Pancreas (tissue), 10 donors: ENCODE measurements at regions of chr1 and their contacts with region 1.

Region 1: GRCh38 chr1:225777583-225778336 is at the start of gene SRP9:
- DNase-seq: peak; percentile 98 to 100 (median 99)
- ATAC-seq: peak; percentile 98 to 99 (median 99)
- H3K4me3 ChIP-seq: peak within 1 kb of the TSS; percentile 63 to 86 (median 78)
- H3K27ac ChIP-seq: peak within 1 kb of the TSS; percentile 85 to 95 (median 89)
- H3K4me1 ChIP-seq: peaks cover 10 to 50% (median 25%) of the 10 kb centered on the region in 3 donors
- H3K27me3 ChIP-seq: no peaks in the 10 kb centered on the region
- CTCF ChIP-seq: peak; percentile 71 to 85 (median 77)
- total RNA-seq, gene SRP9: 63.0 to 102 (median 89.5) TPM

Region 2: GRCh38 chr1:225474986-225475820 is 302.6 kb before region 1 on chr1:
- intact Hi-C with region 1: loop called in 1 of 3 experiments (anchors 10 kb)
- DNase-seq: peak; percentile 40 to 91 (median 80)
- ATAC-seq: peak; percentile 88 to 99 (median 98)
- H3K4me3 ChIP-seq: no peak overlapping the region
- H3K27ac ChIP-seq: no peak overlapping the region
- H3K4me1 ChIP-seq: no peaks in the 10 kb centered on the region
- H3K27me3 ChIP-seq: no peaks in the 10 kb centered on the region
- CTCF ChIP-seq: peak; percentile 100

Region 3: DNA sequence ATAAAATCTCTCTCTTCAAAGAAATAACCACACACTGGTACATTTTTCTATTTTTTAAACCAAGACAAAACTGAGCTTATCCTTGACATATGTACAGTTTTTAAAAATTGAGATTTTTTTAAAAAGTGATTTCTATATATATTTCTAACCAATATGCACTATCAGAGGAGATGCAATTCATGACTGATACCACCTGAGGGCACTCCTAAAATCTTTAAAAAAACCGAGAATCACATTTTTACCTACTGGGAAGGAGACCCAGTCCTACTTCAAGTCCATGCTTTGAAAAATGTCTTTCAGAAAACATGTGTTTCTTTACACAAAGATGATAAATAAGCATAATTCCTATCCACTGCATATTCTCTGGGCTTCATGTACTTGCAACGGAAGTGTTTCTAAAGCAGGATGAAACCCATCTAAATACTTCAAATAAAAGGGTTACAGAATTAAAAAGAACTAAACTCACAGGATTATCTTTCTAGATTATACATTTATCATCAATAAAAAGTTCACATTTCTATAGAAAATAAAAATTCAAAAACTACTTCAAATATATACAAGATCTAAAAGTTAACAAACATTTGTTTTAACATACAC is 223.4 kb before region 1 on chr1:
- intact Hi-C with region 1: loop called in 2 of 3 experiments (anchors 10 kb)
- DNase-seq: no peak
- ATAC-seq: peak; percentile 69 to 84 (median 80)
- H3K4me3 ChIP-seq: no peak overlapping the region
- H3K27ac ChIP-seq: no peak overlapping the region
- H3K4me1 ChIP-seq: no peaks in the 10 kb centered on the region
- H3K27me3 ChIP-seq: no peaks in the 10 kb centered on the region
- CTCF ChIP-seq: peak; percentile 8 to 59 (median 35)

Region 4: DNA sequence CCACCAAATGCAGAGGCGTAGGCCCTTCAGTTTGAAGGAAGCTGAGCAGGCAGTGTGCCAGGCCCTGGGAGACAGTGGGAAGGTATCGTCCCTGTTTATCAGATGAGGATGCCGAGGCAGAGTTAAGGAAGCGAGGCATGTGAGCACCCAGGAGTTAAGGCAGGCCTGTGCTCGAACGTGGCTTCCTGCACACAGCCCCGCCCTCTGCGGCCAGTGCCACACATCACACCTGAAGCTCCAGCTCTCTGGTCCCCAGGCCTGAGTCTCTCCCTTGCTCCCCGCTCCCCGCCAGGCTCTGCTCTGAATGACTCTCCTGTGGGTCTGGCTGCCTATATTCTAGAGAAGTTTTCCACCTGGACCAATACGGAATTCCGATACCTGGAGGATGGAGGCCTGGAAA is 64.3 kb after region 1 on chr1:
- intact Hi-C with region 1: loop called in 1 of 3 experiments (anchors 5 kb)
- DNase-seq: peak in 1 of 6 donors; percentile 53
- ATAC-seq: no peak
- H3K4me3 ChIP-seq: no peak overlapping the region
- H3K27ac ChIP-seq: no peak overlapping the region
- H3K4me1 ChIP-seq: peaks cover 0 to 4% (median under 1%) of the 10 kb centered on the region in 3 donors
- H3K27me3 ChIP-seq: no peaks in the 10 kb centered on the region
- CTCF ChIP-seq: no peak

Region 5: DNA sequence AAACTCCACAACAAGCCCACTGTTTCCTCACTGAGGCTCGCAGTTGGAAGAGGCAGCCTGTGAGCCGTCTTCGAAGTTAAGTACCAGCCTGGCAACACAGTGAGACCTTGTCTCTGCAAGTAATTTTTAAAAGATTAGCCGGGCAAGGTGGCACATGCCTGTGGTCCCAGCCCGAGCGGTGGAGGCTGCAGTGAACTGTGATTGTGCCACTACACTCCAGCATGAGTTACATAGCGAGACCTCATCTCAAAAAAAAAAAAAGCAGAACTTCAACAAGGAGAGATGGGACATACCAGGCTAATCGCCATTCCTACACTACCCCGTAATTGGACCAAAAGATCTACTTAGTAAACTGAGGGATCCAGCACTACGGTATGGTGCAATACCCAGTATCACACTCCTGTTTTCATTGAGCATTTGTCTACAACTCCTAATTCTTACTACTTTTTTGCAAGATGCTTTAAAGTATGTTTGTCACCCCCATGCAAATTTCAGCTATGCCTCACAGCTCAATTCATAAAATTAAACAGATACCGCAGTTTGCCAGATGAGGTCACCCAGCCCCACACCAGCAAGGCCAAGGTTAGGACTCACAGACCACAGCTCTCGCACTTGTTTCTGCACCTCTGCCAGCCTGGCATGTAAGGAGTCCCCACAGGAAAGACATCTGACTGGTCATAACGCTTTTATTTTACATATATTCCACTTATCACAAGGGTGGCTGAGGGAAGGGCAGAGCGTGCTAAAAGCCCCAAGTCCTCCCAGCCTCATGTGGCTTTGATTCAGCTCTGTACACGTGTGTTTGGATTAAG is 200.4 kb after region 1 on chr1:
- intact Hi-C with region 1: loop called in 1 of 3 experiments (anchors 10 kb)
- DNase-seq: peak in 2 of 6 donors; percentile 50 to 53
- ATAC-seq: peak; percentile 12 to 46 (median 36)
- H3K4me3 ChIP-seq: no peak overlapping the region
- H3K27ac ChIP-seq: no peak overlapping the region
- H3K4me1 ChIP-seq: peaks cover 12 to 33% (median 17%) of the 10 kb centered on the region in 3 donors
- H3K27me3 ChIP-seq: no peaks in the 10 kb centered on the region
- CTCF ChIP-seq: no peak